ENCODE measurements at regions of chr3 and their contacts with region 1.

Region 1: DNA sequence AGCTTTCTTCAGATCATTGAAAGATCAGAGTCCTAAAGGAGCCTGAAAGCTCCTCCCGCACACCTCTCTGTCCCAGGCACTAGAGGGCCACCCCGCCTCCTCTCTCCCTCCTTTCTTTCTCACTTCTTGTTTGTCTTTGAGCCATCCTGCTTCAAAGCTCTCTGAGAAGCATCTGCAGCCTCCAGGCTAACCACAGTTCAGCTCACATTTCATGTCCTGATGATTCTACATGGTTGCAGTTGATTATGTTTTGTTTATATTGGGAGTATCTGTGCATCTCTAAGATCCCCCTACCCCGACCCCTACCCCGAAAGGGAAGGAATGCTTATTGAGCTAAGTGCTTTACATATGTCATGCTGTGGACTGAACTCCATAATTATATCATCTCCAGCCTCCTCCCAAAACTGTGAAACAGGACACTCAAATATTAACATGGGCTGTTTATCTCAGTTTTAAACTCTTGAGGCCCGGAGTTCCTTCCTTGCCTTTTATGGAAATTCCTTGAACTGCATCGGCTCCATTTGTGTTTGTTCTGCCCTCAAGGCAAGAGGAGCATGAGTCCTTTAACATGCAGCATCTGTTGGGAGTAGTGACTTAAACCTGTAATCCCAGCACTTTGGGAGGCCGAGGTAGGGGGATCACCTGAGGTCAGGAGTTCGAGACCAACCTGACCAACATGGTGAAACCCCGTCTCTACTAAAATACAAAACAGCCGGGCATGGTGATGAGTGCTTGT is 30.9 kb downstream of the MGLL start:
- DNase-seq: peak; percentile 51
- H3K4me3 ChIP-seq: no peak overlapping the region
- H3K27ac ChIP-seq: no peak overlapping the region
- H3K4me1 ChIP-seq: peaks cover 10% of the 10 kb centered on the region
- H3K27me3 ChIP-seq: no peaks in the 10 kb centered on the region
- CTCF ChIP-seq: peak; percentile 23 to 42

Region 2: GRCh38 chr3:127750226-127751031 is 41.0 kb before region 1 on chr3:
- CTCF ChIA-PET with region 1: no interaction called
- dilution Hi-C with region 1: loop called (anchors 5 kb)
- in situ Hi-C with region 1: no loop called
- intact Hi-C with region 1: no loop called
- DNase-seq: peak; percentile 98
- H3K4me3 ChIP-seq: no peak overlapping the region
- H3K27ac ChIP-seq: peak overlapping the region; percentile 70
- H3K4me1 ChIP-seq: peaks cover 47% of the 10 kb centered on the region
- H3K27me3 ChIP-seq: no peaks in the 10 kb centered on the region
- CTCF ChIP-seq: no peak